ENCODE measurements at regions of chr1 and their contacts with region 1.

Region 1: DNA sequence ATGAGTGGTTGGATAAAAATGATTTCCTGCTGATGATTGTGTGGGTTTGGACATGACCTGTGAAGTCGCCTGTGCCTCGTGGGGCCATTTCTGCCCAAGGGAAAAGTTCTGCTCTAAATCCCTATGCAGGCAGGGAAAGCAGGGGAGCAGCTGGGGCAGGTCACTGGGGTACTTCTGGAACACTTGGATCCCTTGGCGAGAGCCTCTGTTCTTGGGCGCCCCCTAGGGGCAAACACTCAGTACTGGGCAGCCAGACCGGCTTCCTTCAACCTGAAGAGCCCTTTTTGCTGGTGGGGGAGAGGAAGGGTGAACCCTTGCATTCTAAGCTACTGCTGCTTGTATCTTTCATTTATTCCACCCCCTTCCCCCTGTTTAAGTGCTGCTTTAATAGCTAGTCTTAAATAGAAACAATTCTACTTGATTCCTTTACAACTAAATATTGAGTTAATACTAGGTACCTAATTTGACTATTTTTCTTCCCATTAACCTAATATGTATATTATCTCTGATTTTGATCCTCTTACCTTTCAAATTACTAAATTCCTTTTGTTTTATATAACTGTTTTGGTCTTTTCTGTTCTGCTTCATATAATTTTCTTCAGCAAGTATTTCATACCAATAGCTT is 5.1 kb upstream of the CLEC20A start:
- DNase-seq: peak; percentile 48
- ATAC-seq: peak; percentile 91
- H3K4me3 ChIP-seq: no peak overlapping the region
- H3K27ac ChIP-seq: no peak overlapping the region
- H3K4me1 ChIP-seq: peaks cover 0 to 7% of the 10 kb centered on the region in 2 experiments; a peak in 1 of 4 replicates
- H3K27me3 ChIP-seq: no peaks in the 10 kb centered on the region
- CTCF ChIP-seq: peak; percentile 80 to 95 (median 85)
- POLR2A ChIP-seq: no peak
- RAD21 ChIP-seq: peak; percentile 80

Region 2: GRCh38 chr1:177975588-177976495 is 526.0 kb before region 1 on chr1:
- CTCF ChIA-PET with region 1: no interaction called
- POLR2A ChIA-PET with region 1: no interaction called
- RAD21 ChIA-PET with region 1: no interaction called
- intact Hi-C with region 1: no loop called
- DNase-seq: no peak
- ATAC-seq: peak; percentile 47; the same call in 1 of the 2 replicates
- H3K4me3 ChIP-seq: no peak overlapping the region
- H3K27ac ChIP-seq: no peak overlapping the region
- H3K4me1 ChIP-seq: peaks cover 0 to 10% of the 10 kb centered on the region in 2 experiments; a peak in 2 of 4 replicates
- H3K27me3 ChIP-seq: no peaks in the 10 kb centered on the region
- CTCF ChIP-seq: no peak
- POLR2A ChIP-seq: no peak
- RAD21 ChIP-seq: no peak

Region 3: DNA sequence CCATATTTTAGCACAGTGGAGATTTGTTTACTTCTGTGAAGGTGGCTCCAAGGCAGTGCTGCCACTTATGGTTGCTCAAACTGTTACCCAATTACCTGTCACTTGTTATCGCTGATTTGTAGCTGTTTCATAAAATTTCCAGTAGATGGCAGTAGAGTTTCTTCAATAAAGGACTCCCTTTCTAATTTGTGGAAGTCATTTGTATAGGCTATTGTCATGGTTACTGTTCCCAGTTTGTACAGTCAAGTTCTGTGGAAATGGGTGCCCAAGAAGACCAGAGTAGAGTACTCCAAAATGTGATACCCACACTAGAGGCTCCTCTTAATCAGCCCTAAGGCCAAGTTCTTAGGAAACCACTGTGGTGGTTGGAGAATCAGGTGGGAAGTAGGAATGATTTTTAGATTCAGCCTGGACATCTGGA is 191.1 kb before region 1 on chr1:
- CTCF ChIA-PET with region 1: interaction called, 38 read pairs
- POLR2A ChIA-PET with region 1: interaction called, 3 read pairs
- RAD21 ChIA-PET with region 1: interaction called in 1 of 2 experiments, 4 read pairs
- intact Hi-C with region 1: loop called (anchors 2 kb)
- DNase-seq: peak; percentile 64
- ATAC-seq: peak; percentile 91
- H3K4me3 ChIP-seq: no peak overlapping the region
- H3K27ac ChIP-seq: no peak overlapping the region
- H3K4me1 ChIP-seq: peaks cover 8 to 15% of the 10 kb centered on the region in 2 experiments; a peak in 3 of 4 replicates
- H3K27me3 ChIP-seq: no peaks in the 10 kb centered on the region
- CTCF ChIP-seq: peak; percentile 58 to 88 (median 87)
- POLR2A ChIP-seq: no peak
- RAD21 ChIP-seq: peak; percentile 92

Region 4: GRCh38 chr1:178513278-178514022 is 11.6 kb after region 1 on chr1:
- CTCF ChIA-PET with region 1: interaction called, 23 read pairs
- POLR2A ChIA-PET with region 1: no interaction called
- RAD21 ChIA-PET with region 1: no interaction called
- intact Hi-C with region 1: no loop called
- DNase-seq: no peak
- ATAC-seq: peak; percentile 69
- H3K4me3 ChIP-seq: no peak overlapping the region
- H3K27ac ChIP-seq: no peak overlapping the region
- H3K4me1 ChIP-seq: no peaks in the 10 kb centered on the region
- H3K27me3 ChIP-seq: no peaks in the 10 kb centered on the region
- CTCF ChIP-seq: 0 out of 6 replicates have a peak, but pooled peaks of 1 of the 3 experiments have one; percentile 19
- POLR2A ChIP-seq: no peak
- RAD21 ChIP-seq: no peak; the same call in 1 of the 2 replicates

Measured in HCT116 (cell line).